Activated CD4-positive, alpha-beta T cell treated with anti-CD3 and anti-CD28 coated beads for 36 hours (primary cell): ENCODE measurements at regions of chr17 and their contacts with region 1.

Region 1: GRCh38 chr17:45021607-45022287 is 29.7 kb downstream of the DCAKD start:
- DNase-seq: peak; percentile 83
- ATAC-seq: peak; percentile 73
- H3K4me3 Mint-ChIP-seq: no peak overlapping the region
- H3K27ac Mint-ChIP-seq: no peak overlapping the region
- H3K4me1 Mint-ChIP-seq: peaks cover 24% of the 10 kb centered on the region
- H3K27me3 Mint-ChIP-seq: peaks cover 31% of the 10 kb centered on the region

Region 2: GRCh38 chr17:44899069-44899782 is 122.5 kb before region 1 on chr17 and contains the start of gene EFTUD2:
- CTCF ChIA-PET with region 1: interaction called, 6 read pairs
- POLR2A ChIA-PET with region 1: no interaction called
- intact Hi-C with region 1: loop called in 1 of 2 experiments (anchors 1 kb)
- DNase-seq: peak; percentile 95
- ATAC-seq: peak; percentile 94
- H3K4me3 Mint-ChIP-seq: peak within 1 kb of the TSS; percentile 98
- H3K27ac Mint-ChIP-seq: peak within 1 kb of the TSS; percentile 98
- H3K4me1 Mint-ChIP-seq: peaks cover 26% of the 10 kb centered on the region
- H3K27me3 Mint-ChIP-seq: no peaks in the 10 kb centered on the region
- total RNA-seq, gene EFTUD2: 175 to 203 TPM

Region 3: GRCh38 chr17:44919885-44920564 is 101.7 kb before region 1 on chr17:
- CTCF ChIA-PET with region 1: interaction called, 84 read pairs
- POLR2A ChIA-PET with region 1: interaction called, 5 read pairs
- intact Hi-C with region 1: loop called (anchors 1 kb)
- DNase-seq: peak; percentile 85
- ATAC-seq: peak; percentile 93
- H3K4me3 Mint-ChIP-seq: no peak overlapping the region
- H3K27ac Mint-ChIP-seq: no peak overlapping the region
- H3K4me1 Mint-ChIP-seq: no peaks in the 10 kb centered on the region
- H3K27me3 Mint-ChIP-seq: peaks cover 9% of the 10 kb centered on the region

Region 4: GRCh38 chr17:44968226-44969143 is 53.3 kb before region 1 on chr17 and contains the start of gene C1QL1:
- CTCF ChIA-PET with region 1: interaction called, 3 read pairs
- POLR2A ChIA-PET with region 1: no interaction called
- intact Hi-C with region 1: loop called (anchors 1 to 2 kb)
- DNase-seq: peak; percentile 93
- ATAC-seq: peak; percentile 79
- H3K4me3 Mint-ChIP-seq: peak within 1 kb of the TSS; percentile 64
- H3K27ac Mint-ChIP-seq: no peak within 1 kb of the TSS
- H3K4me1 Mint-ChIP-seq: peaks cover 44% of the 10 kb centered on the region
- H3K27me3 Mint-ChIP-seq: peaks cover 41% of the 10 kb centered on the region
- total RNA-seq, gene C1QL1: 0.37 to 0.83 TPM